ENCODE measurements at regions of chr4 and their contacts with region 1.

Region 1: DNA sequence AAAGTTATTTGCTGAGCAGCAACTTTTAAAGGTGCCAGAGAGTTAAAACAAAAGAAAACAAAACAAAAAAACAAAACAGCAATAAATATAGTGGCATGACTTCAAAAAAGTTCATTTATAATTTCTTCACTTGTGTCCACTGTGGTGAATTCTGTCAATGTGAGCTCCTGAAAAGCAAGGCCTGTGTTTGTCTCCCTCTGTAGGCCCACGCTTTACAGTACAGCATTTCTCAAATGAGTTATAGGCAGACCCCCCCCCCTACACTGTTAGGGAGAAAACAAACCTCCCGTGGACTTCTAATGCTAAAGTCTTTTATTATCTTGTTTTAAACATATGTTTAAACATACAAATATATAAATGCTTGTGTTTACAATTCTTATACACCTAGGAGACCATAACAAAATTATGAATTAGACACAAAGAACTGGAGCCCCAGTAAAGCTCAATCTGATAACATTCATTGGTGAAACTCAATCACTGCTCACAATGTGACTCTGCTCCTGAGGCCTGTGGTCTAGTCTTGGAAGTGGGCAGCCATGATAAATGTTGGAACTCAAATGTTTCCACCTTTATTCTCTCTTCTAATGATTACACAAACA is 47.0 kb upstream of the SCOC start:
- DNase-seq: peak in 1 of 2 experiments; percentile 42
- H3K4me3 ChIP-seq: no peak overlapping the region
- H3K4me3 Mint-ChIP-seq: no peak overlapping the region
- H3K27ac Mint-ChIP-seq: no peak overlapping the region
- H3K4me1 ChIP-seq: no peaks in the 10 kb centered on the region
- H3K4me1 Mint-ChIP-seq: no peaks in the 10 kb centered on the region
- H3K27me3 ChIP-seq: no peaks in the 10 kb centered on the region
- H3K27me3 Mint-ChIP-seq: no peaks in the 10 kb centered on the region
- CTCF ChIP-seq: peak; percentile 59 to 78

Region 2: GRCh38 chr4:139656614-139657486 is 669.6 kb before region 1 on chr4:
- CTCF ChIA-PET with region 1: interaction called, 5 read pairs
- POLR2A ChIA-PET with region 1: no interaction called
- intact Hi-C with region 1: loop called (anchors 2 kb)
- DNase-seq: peak; percentile 79 to 83
- H3K4me3 ChIP-seq: no peak overlapping the region
- H3K4me3 Mint-ChIP-seq: peak overlapping the region; percentile 61
- H3K27ac Mint-ChIP-seq: peak overlapping the region; percentile 40
- H3K4me1 ChIP-seq: peaks cover 47% of the 10 kb centered on the region
- H3K4me1 Mint-ChIP-seq: peaks cover 41% of the 10 kb centered on the region
- H3K27me3 ChIP-seq: no peaks in the 10 kb centered on the region
- H3K27me3 Mint-ChIP-seq: no peaks in the 10 kb centered on the region
- CTCF ChIP-seq: peak; percentile 71 to 89

Region 3: GRCh38 chr4:139887376-139887802 is 439.1 kb before region 1 on chr4:
- CTCF ChIA-PET with region 1: no interaction called
- POLR2A ChIA-PET with region 1: no interaction called
- intact Hi-C with region 1: no loop called
- DNase-seq: no peak
- H3K4me3 ChIP-seq: no peak overlapping the region
- H3K4me3 Mint-ChIP-seq: no peak overlapping the region
- H3K27ac Mint-ChIP-seq: no peak overlapping the region
- H3K4me1 ChIP-seq: no peaks in the 10 kb centered on the region
- H3K4me1 Mint-ChIP-seq: no peaks in the 10 kb centered on the region
- H3K27me3 ChIP-seq: no peaks in the 10 kb centered on the region
- H3K27me3 Mint-ChIP-seq: no peaks in the 10 kb centered on the region
- CTCF ChIP-seq: no peak

Region 4: DNA sequence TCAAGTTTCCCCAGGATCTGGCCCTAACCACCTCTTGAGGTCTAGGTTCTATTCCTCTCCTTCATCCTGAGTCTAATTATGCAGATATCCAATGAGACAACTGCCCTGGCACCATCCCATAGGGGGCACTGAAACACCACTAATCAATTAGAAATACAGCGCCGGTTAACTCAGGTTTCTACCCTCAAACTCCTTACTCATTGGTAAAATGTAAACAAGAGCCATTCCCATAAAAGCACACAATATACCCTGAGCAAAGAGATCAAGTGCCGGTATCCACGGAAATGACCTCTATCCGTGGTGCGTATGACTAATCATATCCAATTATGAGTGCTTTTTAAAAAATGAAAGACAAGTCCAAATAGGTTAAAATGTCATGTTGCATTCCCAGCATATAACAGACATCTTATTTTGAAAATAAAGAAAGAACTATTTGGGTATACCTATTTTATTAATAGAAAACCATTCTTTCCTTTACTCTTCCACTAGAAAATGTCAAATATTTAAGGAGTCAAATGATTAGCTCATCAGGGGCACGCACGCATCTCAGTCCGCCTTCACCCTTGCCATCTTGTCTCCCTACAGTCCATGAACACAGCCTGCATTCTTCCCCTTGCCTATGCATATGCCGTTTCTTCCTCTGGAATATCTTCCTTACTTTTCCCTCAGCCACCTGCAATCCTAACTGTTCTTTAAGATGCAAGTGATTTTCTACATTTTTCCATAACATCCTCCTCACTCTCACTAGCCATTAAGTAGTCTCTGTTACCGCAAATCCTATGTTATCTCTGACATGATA is 313.6 kb before region 1 on chr4:
- CTCF ChIA-PET with region 1: interaction called, 14 read pairs
- POLR2A ChIA-PET with region 1: no interaction called
- intact Hi-C with region 1: loop called (anchors 1 kb)
- DNase-seq: peak; percentile 69 to 77
- H3K4me3 ChIP-seq: no peak overlapping the region
- H3K4me3 Mint-ChIP-seq: peak overlapping the region; percentile 0
- H3K27ac Mint-ChIP-seq: peak overlapping the region; percentile 23
- H3K4me1 ChIP-seq: peaks cover 18% of the 10 kb centered on the region
- H3K4me1 Mint-ChIP-seq: peaks cover 30% of the 10 kb centered on the region
- H3K27me3 ChIP-seq: no peaks in the 10 kb centered on the region
- H3K27me3 Mint-ChIP-seq: no peaks in the 10 kb centered on the region
- CTCF ChIP-seq: peak; percentile 56 to 65

Region 5: GRCh38 chr4:140153718-140154571 is 172.5 kb before region 1 on chr4 and contains the start of gene MAML3:
- CTCF ChIA-PET with region 1: no interaction called
- POLR2A ChIA-PET with region 1: no interaction called
- intact Hi-C with region 1: loop called (anchors 2 kb)
- DNase-seq: peak; percentile 95 to 96
- H3K4me3 ChIP-seq: peak within 1 kb of the TSS; percentile 91
- H3K4me3 Mint-ChIP-seq: peak within 1 kb of the TSS; percentile 97
- H3K27ac Mint-ChIP-seq: peak within 1 kb of the TSS; percentile 97
- H3K4me1 ChIP-seq: 0 out of 2 replicates have a peak, but pooled peaks cover 5% of the 10 kb centered on the region
- H3K4me1 Mint-ChIP-seq: no peaks in the 10 kb centered on the region
- H3K27me3 ChIP-seq: no peaks in the 10 kb centered on the region
- H3K27me3 Mint-ChIP-seq: no peaks in the 10 kb centered on the region
- CTCF ChIP-seq: no peak
- total RNA-seq, gene MAML3: 12.1 TPM in 2 replicates

Region 6: DNA sequence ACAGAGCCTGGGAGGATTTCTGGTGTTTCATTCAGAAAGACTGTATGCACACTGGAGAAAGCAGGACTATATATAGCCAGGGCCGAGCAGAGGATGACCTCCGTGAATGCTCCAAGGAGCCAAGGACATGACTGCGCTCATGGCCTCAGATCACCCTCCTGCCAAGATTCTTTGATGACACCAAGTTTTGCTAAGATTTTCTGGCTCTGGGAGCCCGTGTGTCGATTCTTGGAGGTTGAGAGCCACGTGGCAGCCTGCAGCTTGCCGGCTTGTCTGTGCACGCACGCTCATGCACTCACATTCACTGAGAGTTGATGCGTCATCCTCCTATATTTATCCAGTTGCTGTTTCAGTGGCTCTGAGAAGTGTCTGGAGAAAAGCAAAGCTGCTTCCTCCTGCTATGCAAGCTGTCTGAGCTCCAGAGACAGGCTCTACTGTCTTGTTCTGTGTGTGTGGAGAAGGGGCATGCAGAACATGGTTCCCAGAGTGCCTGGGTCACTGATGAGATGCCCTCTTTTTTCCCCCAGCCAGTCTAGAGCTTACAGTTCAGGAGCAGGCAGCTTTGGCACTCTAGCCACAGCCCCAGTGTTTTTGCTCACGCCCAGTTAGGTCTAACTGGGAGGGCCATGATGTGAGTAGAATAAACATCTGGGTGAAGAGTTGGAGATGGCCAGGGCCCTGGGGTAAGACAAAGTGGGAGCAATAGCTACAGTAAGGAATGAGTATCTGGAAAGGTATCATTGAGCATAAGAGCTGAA is 17.9 kb before region 1 on chr4:
- CTCF ChIA-PET with region 1: interaction called, 8 read pairs
- POLR2A ChIA-PET with region 1: no interaction called
- intact Hi-C with region 1: loop called (anchors 1 kb)
- DNase-seq: no peak
- H3K4me3 ChIP-seq: no peak overlapping the region
- H3K4me3 Mint-ChIP-seq: no peak overlapping the region
- H3K27ac Mint-ChIP-seq: no peak overlapping the region
- H3K4me1 ChIP-seq: 0 out of 2 replicates have a peak, but pooled peaks cover 5% of the 10 kb centered on the region
- H3K4me1 Mint-ChIP-seq: peaks cover 9% of the 10 kb centered on the region
- H3K27me3 ChIP-seq: no peaks in the 10 kb centered on the region; the same call in 1 of the 2 replicates
- H3K27me3 Mint-ChIP-seq: no peaks in the 10 kb centered on the region
- CTCF ChIP-seq: no peak

Region 7: GRCh38 chr4:140373328-140374129 is 47.0 kb after region 1 on chr4 and contains the start of gene SCOC:
- CTCF ChIA-PET with region 1: interaction called, 13 read pairs
- POLR2A ChIA-PET with region 1: no interaction called
- intact Hi-C with region 1: no loop called
- DNase-seq: peak; percentile 98 to 99
- H3K4me3 ChIP-seq: peak within 1 kb of the TSS; percentile 90
- H3K4me3 Mint-ChIP-seq: no peak within 1 kb of the TSS
- H3K27ac Mint-ChIP-seq: no peak within 1 kb of the TSS
- H3K4me1 ChIP-seq: peaks cover 19% of the 10 kb centered on the region
- H3K4me1 Mint-ChIP-seq: peaks cover 7% of the 10 kb centered on the region
- H3K27me3 ChIP-seq: no peaks in the 10 kb centered on the region
- H3K27me3 Mint-ChIP-seq: no peaks in the 10 kb centered on the region
- CTCF ChIP-seq: no peak
- total RNA-seq, gene SCOC: 36.8 and 39.6 TPM in 2 replicates

Region 8: GRCh38 chr4:140851032-140851636 is 524.6 kb after region 1 on chr4:
- CTCF ChIA-PET with region 1: interaction called, 10 read pairs
- POLR2A ChIA-PET with region 1: no interaction called
- intact Hi-C with region 1: loop called (anchors 1 kb)
- DNase-seq: peak; percentile 48 to 70
- H3K4me3 ChIP-seq: no peak overlapping the region
- H3K4me3 Mint-ChIP-seq: no peak overlapping the region
- H3K27ac Mint-ChIP-seq: no peak overlapping the region
- H3K4me1 ChIP-seq: peaks cover 3% of the 10 kb centered on the region; the same call in 1 of the 2 replicates
- H3K4me1 Mint-ChIP-seq: peaks cover 5% of the 10 kb centered on the region
- H3K27me3 ChIP-seq: no peaks in the 10 kb centered on the region
- H3K27me3 Mint-ChIP-seq: no peaks in the 10 kb centered on the region
- CTCF ChIP-seq: peak; percentile 64 to 71

Measured in Caco-2 (cell line).